Endothelial cell of umbilical vein (primary cell): ENCODE measurements at regions of chr3 and their contacts with region 1.

Region 1: GRCh38 chr3:166013073-166013679 is 176.0 kb upstream of the BCHE start:
- DNase-seq: peak; percentile 32
- H3K4me3 ChIP-seq: no peak overlapping the region
- H3K27ac ChIP-seq: no peak overlapping the region
- H3K4me1 ChIP-seq: no peaks in the 10 kb centered on the region
- H3K27me3 ChIP-seq: no peaks in the 10 kb centered on the region
- CTCF ChIP-seq: no peak
- POLR2A ChIP-seq: no peak

Region 2: GRCh38 chr3:165994293-165994692 is 18.9 kb before region 1 on chr3:
- CTCF ChIA-PET with region 1: no interaction called
- POLR2A ChIA-PET with region 1: no interaction called
- dilution Hi-C with region 1: no loop called
- intact Hi-C with region 1: no loop called
- DNase-seq: no peak
- H3K4me3 ChIP-seq: no peak overlapping the region
- H3K27ac ChIP-seq: no peak overlapping the region
- H3K4me1 ChIP-seq: no peaks in the 10 kb centered on the region
- H3K27me3 ChIP-seq: no peaks in the 10 kb centered on the region
- CTCF ChIP-seq: no peak
- POLR2A ChIP-seq: no peak

Region 3: GRCh38 chr3:166533740-166534139 is 520.6 kb after region 1 on chr3:
- CTCF ChIA-PET with region 1: no interaction called
- POLR2A ChIA-PET with region 1: no interaction called
- dilution Hi-C with region 1: no loop called
- intact Hi-C with region 1: no loop called
- DNase-seq: no peak
- H3K4me3 ChIP-seq: no peak overlapping the region
- H3K27ac ChIP-seq: no peak overlapping the region
- H3K4me1 ChIP-seq: no peaks in the 10 kb centered on the region
- H3K27me3 ChIP-seq: no peaks in the 10 kb centered on the region
- CTCF ChIP-seq: no peak
- POLR2A ChIP-seq: no peak

Region 4: GRCh38 chr3:166902374-166902773 is 889.2 kb after region 1 on chr3:
- CTCF ChIA-PET with region 1: interaction called, 3 read pairs
- POLR2A ChIA-PET with region 1: no interaction called
- dilution Hi-C with region 1: no loop called
- intact Hi-C with region 1: loop called (anchors 2 kb)
- DNase-seq: no peak
- H3K4me3 ChIP-seq: no peak overlapping the region
- H3K27ac ChIP-seq: no peak overlapping the region
- H3K4me1 ChIP-seq: no peaks in the 10 kb centered on the region
- H3K27me3 ChIP-seq: no peaks in the 10 kb centered on the region
- CTCF ChIP-seq: no peak
- POLR2A ChIP-seq: no peak

Region 5: DNA sequence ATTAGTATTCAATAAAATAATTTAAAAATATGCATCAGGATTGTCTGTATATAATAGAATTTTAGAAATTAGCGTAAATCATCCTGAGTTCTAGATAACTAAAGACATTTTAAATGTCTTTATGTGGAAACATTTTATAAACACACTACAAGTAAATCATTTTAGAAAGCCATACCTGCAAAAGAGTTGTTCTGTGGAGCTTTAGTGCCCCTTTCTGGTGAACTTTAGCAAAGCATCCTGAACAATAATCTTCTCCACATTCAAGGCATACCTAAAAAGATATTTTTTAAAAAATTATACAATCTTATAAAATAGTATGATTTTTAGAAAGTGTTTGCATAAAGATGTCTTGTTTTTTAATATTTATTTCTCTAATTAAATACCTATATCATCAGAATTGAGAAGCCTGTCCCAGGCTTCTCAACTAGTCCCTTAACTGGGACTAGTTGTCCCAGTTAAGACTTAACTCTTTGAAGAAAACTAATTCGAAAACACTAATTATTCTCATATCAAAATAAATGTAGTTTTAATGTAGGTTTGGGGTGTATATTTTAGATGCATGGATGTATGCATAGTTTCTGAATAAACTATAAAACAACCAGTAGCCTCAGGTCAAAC is 1337.2 kb after region 1 on chr3:
- CTCF ChIA-PET with region 1: no interaction called
- POLR2A ChIA-PET with region 1: no interaction called
- dilution Hi-C with region 1: no loop called
- intact Hi-C with region 1: loop called (anchors 5 kb)
- DNase-seq: peak; percentile 4
- H3K4me3 ChIP-seq: no peak overlapping the region
- H3K27ac ChIP-seq: no peak overlapping the region
- H3K4me1 ChIP-seq: no peaks in the 10 kb centered on the region
- H3K27me3 ChIP-seq: no peaks in the 10 kb centered on the region
- CTCF ChIP-seq: no peak
- POLR2A ChIP-seq: no peak